MCF 10A (cell line): ENCODE measurements at regions of chr1 and their contacts with region 1.

Region 1: GRCh38 chr1:192609110-192610079 is 26.6 kb upstream of the RGS13 start:
- DNase-seq: no peak
- H3K4me3 Mint-ChIP-seq: no peak overlapping the region
- H3K27ac Mint-ChIP-seq: no peak overlapping the region
- H3K4me1 Mint-ChIP-seq: no peaks in the 10 kb centered on the region
- H3K27me3 Mint-ChIP-seq: no peaks in the 10 kb centered on the region
- CTCF ChIP-seq: no peak

Region 2: DNA sequence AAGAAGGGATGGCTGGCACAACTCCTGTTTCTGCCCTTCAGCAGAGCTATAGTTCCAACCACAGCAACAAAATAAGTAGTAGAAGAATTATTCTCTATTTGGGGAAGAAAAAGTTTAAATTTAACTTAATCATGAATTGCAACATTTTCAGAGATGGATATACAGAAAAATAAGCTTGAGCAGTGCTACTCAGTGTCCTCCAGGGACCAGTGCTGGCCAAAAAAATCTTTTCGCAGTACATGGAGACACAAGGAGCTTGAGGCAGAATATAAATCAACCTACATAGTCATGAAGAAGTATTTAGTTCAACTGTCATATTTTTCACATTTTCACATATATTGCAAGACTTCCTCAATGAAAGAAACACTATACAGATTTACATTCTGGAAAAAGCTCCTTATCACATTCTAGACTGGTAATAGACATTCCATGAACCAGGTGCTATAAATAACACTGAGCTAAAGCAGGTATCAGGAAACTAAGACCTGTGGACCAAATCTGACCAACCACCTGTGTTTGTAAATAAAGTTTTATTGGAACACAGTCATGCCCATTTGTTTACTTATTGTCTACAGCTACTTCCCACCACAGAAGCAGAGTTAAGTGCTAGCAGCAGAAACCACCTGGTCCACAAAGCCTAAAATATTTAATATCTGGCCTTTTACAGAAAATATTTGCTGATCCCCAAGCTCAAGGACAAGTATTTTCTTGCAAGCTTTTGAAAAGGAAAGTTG is 190.7 kb before region 1 on chr1:
- CTCF ChIA-PET with region 1: no interaction called
- POLR2A ChIA-PET with region 1: no interaction called
- intact Hi-C with region 1: no loop called
- DNase-seq: no peak
- H3K4me3 Mint-ChIP-seq: no peak overlapping the region
- H3K27ac Mint-ChIP-seq: no peak overlapping the region
- H3K4me1 Mint-ChIP-seq: no peaks in the 10 kb centered on the region
- H3K27me3 Mint-ChIP-seq: no peaks in the 10 kb centered on the region
- CTCF ChIP-seq: no peak

Region 3: DNA sequence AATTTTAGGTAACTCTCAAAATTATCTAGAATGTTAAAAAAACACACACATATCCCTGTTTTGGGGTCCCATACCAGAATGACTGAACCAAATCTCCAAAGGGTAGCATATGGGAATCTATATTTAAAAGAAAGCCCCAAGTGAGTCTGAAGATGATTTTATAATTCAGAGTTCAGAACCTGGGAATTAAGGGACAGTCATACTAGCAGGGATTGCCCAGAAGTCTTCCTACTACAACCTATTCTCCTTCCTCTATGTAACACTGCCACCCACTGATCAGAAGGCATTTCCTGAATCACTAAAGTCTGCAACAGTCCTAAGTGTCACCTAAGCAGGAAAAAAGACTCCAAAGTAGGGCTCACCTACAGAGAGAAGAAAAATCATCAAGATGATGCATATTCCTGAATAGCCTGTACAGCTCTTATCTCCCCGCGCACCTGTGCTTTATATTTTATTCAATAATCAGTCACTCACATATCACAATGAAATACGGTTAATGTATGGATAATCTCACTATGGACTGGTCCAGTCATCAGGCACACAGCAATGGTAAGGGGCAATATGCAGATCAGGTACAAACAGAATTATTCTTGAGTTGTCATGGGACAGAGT is 28.9 kb before region 1 on chr1:
- CTCF ChIA-PET with region 1: interaction called, 6 read pairs
- POLR2A ChIA-PET with region 1: interaction called, 3 read pairs
- intact Hi-C with region 1: loop called (anchors 1 kb)
- DNase-seq: peak; percentile 72
- H3K4me3 Mint-ChIP-seq: no peak overlapping the region
- H3K27ac Mint-ChIP-seq: no peak overlapping the region
- H3K4me1 Mint-ChIP-seq: peaks cover 6% of the 10 kb centered on the region
- H3K27me3 Mint-ChIP-seq: no peaks in the 10 kb centered on the region
- CTCF ChIP-seq: peak; percentile 74

Region 4: DNA sequence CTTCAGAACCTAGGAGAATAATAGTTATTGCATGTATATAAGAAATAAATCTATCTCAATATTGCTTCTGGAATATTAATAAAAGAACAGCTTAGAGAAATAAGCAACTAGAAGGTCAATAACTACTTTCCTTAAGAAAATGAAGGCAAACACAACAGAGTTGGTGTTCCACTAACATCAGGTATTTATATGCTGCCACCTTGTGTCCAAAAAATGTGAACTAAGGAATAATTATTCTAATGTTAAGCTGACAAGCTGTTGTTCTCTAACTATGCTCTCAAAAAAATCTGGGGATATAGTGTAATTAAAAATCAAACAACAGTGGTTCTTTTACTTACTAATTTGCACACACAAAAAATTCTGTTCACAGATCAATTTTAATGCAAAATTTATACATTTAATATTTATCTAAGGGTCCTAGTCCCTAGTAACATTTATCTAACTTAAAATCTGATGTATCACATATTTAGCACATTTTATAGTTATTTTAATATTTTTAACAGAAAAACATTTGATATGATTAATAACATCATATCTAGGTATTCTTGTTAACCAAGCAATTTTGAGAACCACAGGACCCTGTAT is 410.1 kb after region 1 on chr1:
- CTCF ChIA-PET with region 1: interaction called, 6 read pairs
- POLR2A ChIA-PET with region 1: no interaction called
- intact Hi-C with region 1: loop called (anchors 5 kb)
- DNase-seq: peak; percentile 76
- H3K4me3 Mint-ChIP-seq: no peak overlapping the region
- H3K27ac Mint-ChIP-seq: peak overlapping the region; percentile 31
- H3K4me1 Mint-ChIP-seq: no peaks in the 10 kb centered on the region
- H3K27me3 Mint-ChIP-seq: no peaks in the 10 kb centered on the region
- CTCF ChIP-seq: peak; percentile 59